Activated CD4-positive, alpha-beta T cell treated with anti-CD3 and anti-CD28 coated beads for 36 hours (primary cell): ENCODE measurements at regions of chr2 and their contacts with region 1.

Region 1: DNA sequence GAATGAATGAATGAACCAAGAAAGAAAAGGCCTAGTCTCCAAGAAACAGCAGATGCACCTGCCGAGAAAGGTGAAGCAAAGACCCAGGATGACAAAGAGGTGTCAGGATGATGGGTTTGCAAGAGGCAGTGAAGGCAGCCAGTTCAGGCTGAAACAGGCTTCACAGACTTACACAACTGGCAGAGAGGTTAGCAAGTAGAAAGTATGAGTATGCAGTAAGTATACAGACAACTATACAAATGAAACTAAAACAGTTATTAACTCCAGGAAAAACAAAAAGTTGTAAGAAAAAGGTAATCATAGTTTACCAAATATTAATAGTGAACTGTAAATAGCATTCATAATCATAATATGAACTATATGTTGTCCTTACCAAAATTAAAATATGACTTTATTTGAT is 19.8 kb upstream of the RNU4ATAC start:
- DNase-seq: no peak
- ATAC-seq: no peak
- H3K4me3 Mint-ChIP-seq: no peak overlapping the region
- H3K27ac Mint-ChIP-seq: no peak overlapping the region
- H3K4me1 Mint-ChIP-seq: peaks cover 13% of the 10 kb centered on the region
- H3K27me3 Mint-ChIP-seq: no peaks in the 10 kb centered on the region

Region 2: GRCh38 chr2:121095257-121096080 is 415.4 kb before region 1 on chr2:
- CTCF ChIA-PET with region 1: no interaction called
- POLR2A ChIA-PET with region 1: no interaction called
- intact Hi-C with region 1: no loop called
- DNase-seq: peak; percentile 64
- ATAC-seq: peak; percentile 51
- H3K4me3 Mint-ChIP-seq: no peak overlapping the region
- H3K27ac Mint-ChIP-seq: no peak overlapping the region
- H3K4me1 Mint-ChIP-seq: no peaks in the 10 kb centered on the region
- H3K27me3 Mint-ChIP-seq: no peaks in the 10 kb centered on the region

Region 3: DNA sequence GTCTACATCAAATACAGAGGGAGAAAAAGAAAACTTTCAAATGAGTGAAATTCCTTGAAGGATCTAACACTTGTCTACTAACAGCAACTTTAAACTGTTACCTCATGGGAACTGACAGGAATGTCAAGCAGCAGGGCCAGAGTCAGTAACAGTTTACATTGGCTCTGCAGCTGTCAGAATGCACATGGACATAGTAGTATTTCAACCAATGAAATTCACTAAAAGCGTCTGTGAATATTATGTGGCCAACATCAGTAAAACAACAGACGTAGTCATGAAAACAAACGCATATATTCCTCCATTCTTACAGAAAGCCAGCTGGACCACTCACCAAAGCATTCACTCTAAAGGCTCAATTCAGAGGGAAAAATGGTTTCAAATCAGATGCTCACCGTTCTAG is 59.5 kb before region 1 on chr2:
- CTCF ChIA-PET with region 1: no interaction called
- POLR2A ChIA-PET with region 1: no interaction called
- intact Hi-C with region 1: loop called in 1 of 2 experiments (anchors 2 kb)
- DNase-seq: no peak
- ATAC-seq: no peak
- H3K4me3 Mint-ChIP-seq: no peak overlapping the region
- H3K27ac Mint-ChIP-seq: no peak overlapping the region
- H3K4me1 Mint-ChIP-seq: no peaks in the 10 kb centered on the region
- H3K27me3 Mint-ChIP-seq: no peaks in the 10 kb centered on the region